ENCODE measurements at regions of chr6 and their contacts with region 1.

Region 1: GRCh38 chr6:117555882-117556498 is 46.3 kb downstream of the GOPC start:
- DNase-seq: peak; percentile 76
- ATAC-seq: peak; percentile 38; the same call in 1 of the 2 replicates
- H3K4me3 ChIP-seq: no peak overlapping the region
- H3K27ac ChIP-seq: no peak overlapping the region
- H3K4me1 ChIP-seq: peaks cover 11% of the 10 kb centered on the region
- H3K27me3 ChIP-seq: no peaks in the 10 kb centered on the region
- CTCF ChIP-seq: peak; percentile 66

Region 2: DNA sequence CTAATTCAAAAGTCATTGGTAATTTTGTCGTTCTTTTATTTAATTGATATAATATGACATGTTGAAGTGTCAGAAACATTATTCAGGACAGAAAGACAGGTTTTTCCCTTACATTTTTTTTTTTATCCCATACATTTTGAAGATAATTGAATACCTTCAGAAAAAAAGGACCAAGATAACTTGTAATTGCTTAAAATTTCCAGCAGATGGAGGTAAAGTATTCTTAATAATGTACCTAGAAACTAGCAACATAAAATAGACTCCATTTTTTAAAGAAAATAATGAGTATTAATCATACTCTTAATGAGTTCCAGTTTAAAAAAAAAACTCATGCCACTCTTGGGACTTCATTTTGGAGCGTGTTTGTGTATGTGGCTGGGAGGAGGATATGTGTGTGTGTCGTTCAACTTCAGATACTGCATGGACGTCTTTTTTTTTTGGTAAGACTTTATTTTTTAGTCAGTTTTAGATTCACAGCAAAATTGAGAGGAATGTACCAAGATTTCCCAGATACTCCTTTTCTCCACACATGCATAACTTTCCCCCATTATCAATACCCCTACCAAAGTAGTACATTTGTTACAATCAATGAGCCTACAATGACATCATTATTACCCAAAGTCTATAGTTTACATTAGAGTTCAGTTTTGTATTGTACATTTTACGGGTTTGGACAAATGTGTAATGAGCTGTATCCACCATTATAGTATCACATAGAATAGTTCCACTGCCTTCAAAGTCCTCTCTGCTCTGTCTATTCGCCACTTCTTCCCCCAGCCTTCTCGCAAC is 209.7 kb before region 1 on chr6:
- CTCF ChIA-PET with region 1: interaction called, 3 read pairs
- POLR2A ChIA-PET with region 1: no interaction called
- intact Hi-C with region 1: loop called (anchors 1 kb)
- DNase-seq: peak; percentile 69
- ATAC-seq: no peak
- H3K4me3 ChIP-seq: peak overlapping the region; percentile 42; the same call in 1 of the 2 replicates
- H3K27ac ChIP-seq: no peak overlapping the region
- H3K4me1 ChIP-seq: 0 out of 2 replicates have a peak, but pooled peaks cover 7% of the 10 kb centered on the region
- H3K27me3 ChIP-seq: no peaks in the 10 kb centered on the region
- CTCF ChIP-seq: peak; percentile 64

Region 3: DNA sequence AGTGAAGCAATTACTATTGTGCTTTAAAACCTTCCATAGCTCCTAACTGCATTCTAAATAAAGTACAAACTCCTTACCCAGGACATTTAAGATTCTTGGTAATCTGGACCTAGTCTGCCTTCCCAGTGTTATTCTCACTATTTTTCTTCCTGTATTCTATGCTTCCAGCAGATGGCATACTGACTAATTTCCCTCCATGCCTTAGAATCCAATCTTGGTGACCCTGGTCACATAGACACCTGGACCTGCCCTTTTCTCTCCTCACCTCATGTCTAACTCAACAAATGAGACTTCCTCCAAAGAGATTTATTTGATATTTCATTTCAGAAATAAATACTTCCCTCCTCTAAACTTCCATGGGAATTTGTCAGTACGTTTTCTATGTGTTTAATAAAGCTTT is 156.1 kb before region 1 on chr6:
- CTCF ChIA-PET with region 1: no interaction called
- POLR2A ChIA-PET with region 1: no interaction called
- intact Hi-C with region 1: loop called (anchors 1 kb)
- DNase-seq: peak; percentile 41
- ATAC-seq: peak; percentile 51; the same call in 1 of the 2 replicates
- H3K4me3 ChIP-seq: no peak overlapping the region
- H3K27ac ChIP-seq: no peak overlapping the region
- H3K4me1 ChIP-seq: peaks cover 6% of the 10 kb centered on the region; the same call in 1 of the 2 replicates
- H3K27me3 ChIP-seq: no peaks in the 10 kb centered on the region
- CTCF ChIP-seq: peak; percentile 53